Upper lobe of right lung (tissue), 1 donor: ENCODE measurements at regions of chr2 and their contacts with region 1.

Region 1: DNA sequence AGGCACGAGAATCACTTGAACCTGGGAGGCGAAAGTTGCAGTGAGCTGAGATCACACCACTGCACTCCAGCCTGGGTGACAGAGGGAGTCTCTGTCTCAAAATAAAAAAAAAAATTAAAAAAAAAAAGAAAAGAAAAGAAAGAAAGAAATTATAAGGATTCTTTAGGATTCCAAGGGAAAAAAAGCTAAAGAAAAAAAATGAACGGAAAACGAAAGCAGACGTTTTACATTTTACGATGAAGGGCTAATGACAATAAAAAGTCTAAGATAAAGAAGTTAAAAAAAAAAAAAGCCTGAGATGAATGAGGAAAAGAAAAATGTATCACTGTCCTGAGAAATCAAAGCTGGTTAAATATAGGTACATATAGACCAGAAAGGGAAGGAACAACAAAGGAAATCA is 58.5 kb downstream of the SOS1 start:
- DNase-seq: no peak
- ATAC-seq: no peak
- H3K4me3 ChIP-seq: no peak overlapping the region
- H3K27ac ChIP-seq: no peak overlapping the region
- H3K4me1 ChIP-seq: no peaks in the 10 kb centered on the region
- H3K27me3 ChIP-seq: no peaks in the 10 kb centered on the region
- CTCF ChIP-seq: no peak

Region 2: DNA sequence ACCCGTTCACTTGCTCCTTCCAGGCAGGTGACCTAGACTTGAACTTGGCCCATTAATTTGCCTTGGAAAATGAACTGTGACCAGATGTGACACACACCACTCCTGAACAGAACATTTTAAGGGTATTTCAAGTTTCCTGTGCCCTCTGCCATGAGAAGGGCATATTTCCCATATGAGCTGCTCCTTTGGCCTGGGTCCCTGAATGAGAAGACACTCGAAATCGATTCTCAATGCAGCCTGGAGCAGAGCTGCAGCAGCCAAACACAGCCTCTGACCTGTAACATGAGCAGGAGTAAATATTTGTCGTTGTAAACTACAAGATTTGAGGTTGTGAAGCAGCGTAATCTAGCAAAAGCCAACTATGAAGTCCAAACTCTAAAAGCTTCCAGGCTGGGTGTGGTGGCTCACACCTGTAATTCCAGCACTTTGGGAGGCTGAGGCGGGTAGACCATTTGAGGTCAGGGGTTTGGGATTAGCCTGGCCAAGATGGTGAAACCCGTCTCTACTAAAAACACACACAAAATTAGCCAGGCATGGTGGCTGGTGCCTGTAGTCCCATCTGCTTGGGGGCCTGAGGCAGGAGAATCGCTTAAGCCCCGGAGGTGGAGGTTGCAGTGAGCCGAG is 88.7 kb after region 1 on chr2:
- intact Hi-C with region 1: no loop called
- DNase-seq: no peak
- ATAC-seq: no peak
- H3K4me3 ChIP-seq: no peak overlapping the region
- H3K27ac ChIP-seq: no peak overlapping the region
- H3K4me1 ChIP-seq: no peaks in the 10 kb centered on the region
- H3K27me3 ChIP-seq: no peaks in the 10 kb centered on the region
- CTCF ChIP-seq: no peak

Region 3: GRCh38 chr2:39227628-39228412 is 165.5 kb after region 1 on chr2:
- intact Hi-C with region 1: loop called (anchors 5 kb)
- DNase-seq: peak; percentile 89
- ATAC-seq: peak; percentile 96
- H3K4me3 ChIP-seq: peak overlapping the region; percentile 24
- H3K27ac ChIP-seq: no peak overlapping the region
- H3K4me1 ChIP-seq: peaks cover 11% of the 10 kb centered on the region
- H3K27me3 ChIP-seq: no peaks in the 10 kb centered on the region
- CTCF ChIP-seq: peak; percentile 93

Region 4: DNA sequence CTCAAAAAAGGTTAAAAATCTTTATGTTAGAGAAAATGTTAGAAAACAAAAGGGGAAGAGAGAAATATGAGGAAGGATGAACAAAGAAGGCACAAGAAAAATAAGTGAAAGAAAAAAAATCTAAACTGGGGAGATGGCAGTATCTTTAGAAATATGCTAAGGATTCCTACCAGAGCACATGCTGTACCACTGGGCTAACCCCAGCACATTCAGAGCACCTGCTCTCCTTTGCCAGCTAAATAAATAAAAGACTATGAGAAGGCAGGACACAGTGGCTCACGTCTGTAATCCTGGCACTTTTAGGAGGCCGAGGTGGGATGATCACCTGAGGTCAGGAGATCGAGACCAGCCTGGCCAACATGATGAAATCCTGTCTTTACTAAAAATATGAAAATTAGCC is 273.6 kb after region 1 on chr2:
- intact Hi-C with region 1: no loop called
- DNase-seq: no peak
- ATAC-seq: no peak
- H3K4me3 ChIP-seq: no peak overlapping the region
- H3K27ac ChIP-seq: no peak overlapping the region
- H3K4me1 ChIP-seq: no peaks in the 10 kb centered on the region
- H3K27me3 ChIP-seq: no peaks in the 10 kb centered on the region
- CTCF ChIP-seq: no peak